A673 (cell line): ENCODE measurements at regions of chr3 and their contacts with region 1.

Region 1: DNA sequence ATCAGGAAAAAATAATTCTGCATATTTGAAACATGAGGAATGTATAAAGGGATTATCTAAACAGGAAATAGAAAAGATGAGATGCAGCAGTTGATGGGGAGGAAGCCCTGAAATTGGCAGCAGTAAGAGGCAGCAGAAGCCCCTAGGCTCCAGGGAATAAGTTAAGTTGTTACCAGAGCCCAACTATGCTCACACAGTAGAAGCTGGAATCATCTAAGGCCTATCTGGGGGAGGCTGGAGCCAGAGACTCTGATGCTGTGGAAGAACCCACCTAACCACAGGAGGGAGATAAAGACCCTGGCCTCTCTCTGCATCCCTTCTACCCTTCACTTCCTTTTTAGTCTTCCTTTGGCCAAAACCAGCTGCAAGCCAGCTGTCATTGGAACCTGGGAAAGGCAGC is 519.7 kb downstream of the DIPK2A start:
- DNase-seq: peak; percentile 96
- H3K4me3 ChIP-seq: no peak overlapping the region
- H3K27ac ChIP-seq: peak overlapping the region; percentile 75
- H3K4me1 ChIP-seq: peaks cover 39% of the 10 kb centered on the region
- H3K27me3 ChIP-seq: no peaks in the 10 kb centered on the region
- CTCF ChIP-seq: peak; percentile 33; the same call in 1 of the 2 replicates

Region 2: GRCh38 chr3:144549161-144549560 is 57.8 kb after region 1 on chr3:
- CTCF ChIA-PET with region 1: no interaction called
- POLR2A ChIA-PET with region 1: no interaction called
- intact Hi-C with region 1: no loop called
- DNase-seq: peak; percentile 39
- H3K4me3 ChIP-seq: no peak overlapping the region
- H3K27ac ChIP-seq: no peak overlapping the region
- H3K4me1 ChIP-seq: peaks cover 12% of the 10 kb centered on the region
- H3K27me3 ChIP-seq: no peaks in the 10 kb centered on the region
- CTCF ChIP-seq: no peak

Region 3: GRCh38 chr3:144770915-144771351 is 279.6 kb after region 1 on chr3:
- CTCF ChIA-PET with region 1: no interaction called
- POLR2A ChIA-PET with region 1: no interaction called
- intact Hi-C with region 1: loop called (anchors 10 kb)
- DNase-seq: peak; percentile 61
- H3K4me3 ChIP-seq: no peak overlapping the region
- H3K27ac ChIP-seq: no peak overlapping the region
- H3K4me1 ChIP-seq: no peaks in the 10 kb centered on the region
- H3K27me3 ChIP-seq: no peaks in the 10 kb centered on the region
- CTCF ChIP-seq: peak; percentile 46

Region 4: GRCh38 chr3:144866476-144866875 is 375.1 kb after region 1 on chr3:
- CTCF ChIA-PET with region 1: no interaction called
- POLR2A ChIA-PET with region 1: no interaction called
- intact Hi-C with region 1: no loop called
- DNase-seq: no peak
- H3K4me3 ChIP-seq: no peak overlapping the region
- H3K27ac ChIP-seq: no peak overlapping the region
- H3K4me1 ChIP-seq: peaks cover 19% of the 10 kb centered on the region
- H3K27me3 ChIP-seq: no peaks in the 10 kb centered on the region
- CTCF ChIP-seq: no peak

Region 5: DNA sequence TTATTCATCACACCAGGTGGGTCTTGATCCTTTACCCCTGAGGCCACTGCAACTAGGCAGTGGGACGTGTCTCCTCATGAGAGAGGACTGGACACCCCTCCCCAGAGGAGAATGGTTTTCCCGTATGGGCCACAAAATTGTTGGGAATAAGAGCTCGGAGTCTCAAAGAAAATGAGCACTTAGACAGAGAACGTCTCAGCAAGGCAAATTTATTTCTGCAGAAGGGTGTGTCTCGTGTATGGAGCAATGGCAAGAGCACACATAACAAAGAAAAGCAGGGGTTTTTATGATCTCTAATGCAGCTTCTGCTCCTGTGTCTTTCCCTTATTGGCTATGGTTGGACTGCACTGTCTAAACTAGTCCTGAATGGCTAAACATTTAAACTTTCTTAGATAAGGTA is 866.1 kb after region 1 on chr3:
- CTCF ChIA-PET with region 1: no interaction called
- POLR2A ChIA-PET with region 1: no interaction called
- intact Hi-C with region 1: no loop called
- DNase-seq: no peak
- H3K4me3 ChIP-seq: no peak overlapping the region
- H3K27ac ChIP-seq: no peak overlapping the region
- H3K4me1 ChIP-seq: no peaks in the 10 kb centered on the region
- H3K27me3 ChIP-seq: no peaks in the 10 kb centered on the region
- CTCF ChIP-seq: no peak